Gastrocnemius medialis (tissue), 4 donors: ENCODE measurements at regions of chr1 and their contacts with region 1.

Region 1: DNA sequence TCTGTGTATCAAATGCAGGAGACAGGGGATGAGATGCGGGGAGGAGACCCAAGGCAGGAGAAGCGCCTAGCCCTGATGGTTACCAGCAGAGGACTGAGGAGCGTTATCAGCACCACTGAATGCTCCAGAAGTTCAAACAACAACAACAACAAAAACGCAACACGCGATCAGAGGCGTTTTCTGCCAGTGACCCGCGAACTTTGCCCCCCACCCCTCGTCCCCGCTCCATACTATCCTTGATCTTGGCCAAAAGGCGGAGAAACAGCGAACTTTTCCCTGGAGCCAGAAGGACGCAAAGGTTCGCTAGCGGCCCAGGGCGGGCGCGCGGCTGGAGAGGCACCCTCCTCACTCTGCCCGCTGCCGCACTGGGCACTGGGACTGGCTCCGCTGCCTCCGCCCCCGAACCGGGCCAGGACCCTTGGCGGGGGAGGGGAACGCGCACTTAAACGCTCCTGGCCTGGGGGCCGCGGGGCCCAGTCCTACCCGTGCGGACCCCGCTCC is 699 bp downstream of the ECHDC2 start:
- DNase-seq: peak in 1 of 2 donors; percentile 24
- ATAC-seq: peak; percentile 53 to 63
- H3K4me3 ChIP-seq: peak overlapping the region; percentile 75 to 89 (median 85)
- H3K27ac ChIP-seq: peak overlapping the region; percentile 89 to 94 (median 91)
- H3K4me1 ChIP-seq: peaks cover 20 to 36% of the 10 kb centered on the region in 2 donors
- H3K27me3 ChIP-seq: no peaks in the 10 kb centered on the region
- CTCF ChIP-seq: no peak
- POLR2A ChIP-seq: no peak

Region 2: DNA sequence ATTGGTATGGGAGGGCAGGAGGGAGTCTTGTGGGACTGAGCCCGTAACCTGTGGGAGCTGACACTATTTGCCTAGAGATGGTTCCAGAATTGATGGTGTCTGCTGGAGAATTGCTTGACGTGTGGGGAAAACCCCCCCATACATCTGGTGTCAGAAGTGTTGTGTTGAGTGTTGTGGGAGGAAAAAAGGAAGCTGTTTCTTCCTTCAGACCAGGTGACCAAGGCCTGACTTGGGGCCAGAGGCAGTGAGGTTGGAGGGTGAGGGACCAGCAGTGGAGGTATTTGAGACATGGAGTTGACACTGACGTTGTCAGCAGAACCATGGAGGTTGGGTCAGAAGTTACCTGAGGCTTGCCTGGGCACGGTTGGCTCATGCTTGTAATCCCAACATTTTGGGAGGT is 279.5 kb before region 1 on chr1:
- in situ Hi-C with region 1: no loop called
- intact Hi-C with region 1: no loop called
- DNase-seq: no peak
- ATAC-seq: no peak
- H3K4me3 ChIP-seq: no peak overlapping the region
- H3K27ac ChIP-seq: no peak overlapping the region
- H3K4me1 ChIP-seq: peaks cover 8 to 11% of the 10 kb centered on the region in 2 donors
- H3K27me3 ChIP-seq: no peaks in the 10 kb centered on the region
- CTCF ChIP-seq: no peak
- POLR2A ChIP-seq: no peak

Region 3: GRCh38 chr1:52771384-52771783 is 149.5 kb before region 1 on chr1:
- in situ Hi-C with region 1: no loop called
- intact Hi-C with region 1: loop called (anchors 5 kb)
- DNase-seq: no peak
- ATAC-seq: no peak
- H3K4me3 ChIP-seq: no peak overlapping the region
- H3K27ac ChIP-seq: peak overlapping the region; percentile 67 to 90 (median 82)
- H3K4me1 ChIP-seq: peaks cover 41 to 62% of the 10 kb centered on the region in 2 donors
- H3K27me3 ChIP-seq: no peaks in the 10 kb centered on the region
- CTCF ChIP-seq: no peak
- POLR2A ChIP-seq: no peak

Region 4: DNA sequence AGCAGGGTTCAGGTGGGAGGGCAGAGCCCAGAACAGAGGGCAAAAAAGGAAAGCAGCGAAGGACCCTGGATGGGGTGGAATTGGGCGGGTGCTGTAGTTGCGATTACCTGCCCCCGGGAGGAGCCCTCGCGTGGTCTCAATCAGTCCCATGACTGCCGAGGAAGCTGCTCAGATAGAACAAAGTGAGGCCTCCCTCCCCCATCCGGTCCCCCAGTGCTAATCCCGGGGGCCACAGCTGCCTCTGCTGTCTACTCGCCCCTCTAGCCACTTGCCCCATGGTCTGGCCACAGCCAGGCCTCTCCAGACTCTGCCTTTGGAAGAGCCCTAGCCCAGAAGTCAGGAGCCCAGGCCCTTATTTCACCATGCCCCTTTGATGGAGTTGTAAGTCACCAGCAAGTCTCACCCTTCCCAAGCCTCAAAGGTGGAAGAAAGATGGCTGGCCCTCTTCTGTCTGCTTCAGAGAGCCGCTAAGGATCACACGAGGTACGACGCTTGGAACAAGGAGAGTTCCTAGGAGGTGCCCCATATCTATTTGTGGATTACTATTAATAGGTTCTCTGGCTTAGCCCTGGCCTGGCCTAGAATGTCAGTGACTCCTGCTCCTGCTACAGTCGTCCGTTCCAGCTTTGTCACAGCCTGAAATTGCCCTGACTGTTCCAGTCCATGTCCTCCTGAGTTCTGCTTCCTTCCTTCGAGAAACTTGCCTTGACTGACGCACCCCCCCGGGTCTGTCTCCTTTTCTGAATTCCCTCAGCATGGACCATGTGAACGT is 15.7 kb before region 1 on chr1:
- in situ Hi-C with region 1: no loop called
- intact Hi-C with region 1: loop called (anchors 1 kb)
- DNase-seq: peak; percentile 75 to 89
- ATAC-seq: peak; percentile 99
- H3K4me3 ChIP-seq: peak overlapping the region in 3 of 4 donors; percentile 5 to 25 (median 5)
- H3K27ac ChIP-seq: peak overlapping the region; percentile 79 to 94 (median 86)
- H3K4me1 ChIP-seq: peaks cover 21 to 22% of the 10 kb centered on the region in 2 donors
- H3K27me3 ChIP-seq: no peaks in the 10 kb centered on the region
- CTCF ChIP-seq: peak in 3 of 5 experiments; percentile 7 to 42 (median 36)
- POLR2A ChIP-seq: peak in 1 of 2 donors; percentile 25